Activated naive CD4-positive, alpha-beta T cell treated with anti-CD3 and anti-CD28 coated beads for 36 hours (primary cell): ENCODE measurements at regions of chr2 and their contacts with region 1.

Region 1: DNA sequence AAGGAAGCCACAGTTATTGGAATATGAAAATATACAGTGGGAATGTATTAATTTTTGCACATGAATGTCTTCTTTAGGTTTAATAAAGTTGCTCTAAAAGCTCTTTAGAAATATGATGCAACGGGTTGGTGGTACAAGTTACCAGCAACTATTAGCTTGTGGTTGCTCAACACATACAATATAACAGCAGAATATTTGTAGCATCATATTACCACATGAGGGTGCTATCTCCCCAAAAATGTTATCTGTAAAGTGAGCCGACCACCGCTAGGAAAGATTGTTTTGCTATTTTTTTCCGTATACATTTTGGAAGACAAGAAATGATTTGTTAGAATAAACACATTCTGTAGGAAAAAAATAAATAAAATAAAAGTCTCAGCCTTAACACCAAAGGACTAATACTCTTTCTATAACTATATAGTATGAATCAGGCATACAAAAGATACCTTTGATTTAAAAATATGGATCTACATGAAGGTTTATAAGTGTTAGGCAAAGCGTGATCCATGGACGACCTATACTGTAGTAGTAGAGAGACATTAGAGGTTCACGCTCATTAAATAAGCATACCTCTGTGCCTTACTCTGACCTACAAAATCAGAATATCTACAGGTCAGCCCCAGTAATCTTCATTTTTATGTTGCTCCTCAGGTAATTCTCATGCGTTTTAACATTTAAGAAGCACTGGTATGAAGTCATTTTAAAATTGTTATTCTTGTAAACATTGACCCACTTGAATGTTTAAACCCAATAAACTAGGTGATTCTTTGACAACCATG is 1110.6 kb upstream of the ACVR2A start:
- DNase-seq: no peak
- H3K4me3 Mint-ChIP-seq: no peak overlapping the region
- H3K27ac Mint-ChIP-seq: no peak overlapping the region
- H3K4me1 Mint-ChIP-seq: no peaks in the 10 kb centered on the region
- H3K27me3 Mint-ChIP-seq: no peaks in the 10 kb centered on the region

Region 2: DNA sequence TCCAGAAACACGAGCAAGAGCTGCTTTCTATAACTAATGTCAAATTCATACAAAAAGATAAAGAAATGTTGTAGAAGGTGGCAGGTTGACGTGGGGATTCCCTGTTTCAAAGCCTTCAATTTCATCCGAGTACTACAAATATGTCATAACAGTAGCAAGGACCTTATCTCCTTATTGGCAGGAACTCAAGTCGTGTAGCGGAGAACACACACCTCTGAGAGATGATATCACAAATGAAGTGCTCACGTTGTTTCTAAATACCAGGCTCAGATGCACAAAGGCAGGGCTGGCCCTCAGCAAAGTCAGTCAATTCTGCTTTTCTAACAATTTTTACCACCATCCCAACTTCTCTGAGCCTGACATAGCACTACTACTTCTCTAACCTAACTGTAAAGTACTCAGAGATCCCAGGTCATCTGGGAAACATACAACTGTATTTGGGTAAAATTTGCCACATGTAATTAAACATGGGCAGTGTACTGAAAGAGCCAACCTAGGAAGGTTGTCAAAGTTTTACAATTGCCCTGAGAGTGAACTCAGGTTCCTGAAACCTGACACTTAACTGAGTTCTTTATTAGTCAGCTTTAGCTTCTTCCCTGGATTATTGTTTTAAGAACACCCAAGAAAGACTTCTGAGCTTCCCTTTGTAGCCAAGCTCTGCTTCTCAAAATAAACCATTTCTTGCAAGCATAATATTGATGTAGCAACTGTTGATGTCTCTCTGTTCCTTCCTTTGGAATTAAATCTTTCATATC is 296.9 kb after region 1 on chr2:
- CTCF ChIA-PET with region 1: no interaction called
- intact Hi-C with region 1: loop called (anchors 10 kb)
- DNase-seq: no peak
- H3K4me3 Mint-ChIP-seq: no peak overlapping the region
- H3K27ac Mint-ChIP-seq: no peak overlapping the region
- H3K4me1 Mint-ChIP-seq: no peaks in the 10 kb centered on the region
- H3K27me3 Mint-ChIP-seq: peaks cover 26% of the 10 kb centered on the region